HEK293T (cell line): ENCODE measurements at regions of chr19 and their contacts with region 1.

Region 1: GRCh38 chr19:17226002-17226933 is at the start of gene OCEL1:
- DNase-seq: peak; percentile 93

Region 2: DNA sequence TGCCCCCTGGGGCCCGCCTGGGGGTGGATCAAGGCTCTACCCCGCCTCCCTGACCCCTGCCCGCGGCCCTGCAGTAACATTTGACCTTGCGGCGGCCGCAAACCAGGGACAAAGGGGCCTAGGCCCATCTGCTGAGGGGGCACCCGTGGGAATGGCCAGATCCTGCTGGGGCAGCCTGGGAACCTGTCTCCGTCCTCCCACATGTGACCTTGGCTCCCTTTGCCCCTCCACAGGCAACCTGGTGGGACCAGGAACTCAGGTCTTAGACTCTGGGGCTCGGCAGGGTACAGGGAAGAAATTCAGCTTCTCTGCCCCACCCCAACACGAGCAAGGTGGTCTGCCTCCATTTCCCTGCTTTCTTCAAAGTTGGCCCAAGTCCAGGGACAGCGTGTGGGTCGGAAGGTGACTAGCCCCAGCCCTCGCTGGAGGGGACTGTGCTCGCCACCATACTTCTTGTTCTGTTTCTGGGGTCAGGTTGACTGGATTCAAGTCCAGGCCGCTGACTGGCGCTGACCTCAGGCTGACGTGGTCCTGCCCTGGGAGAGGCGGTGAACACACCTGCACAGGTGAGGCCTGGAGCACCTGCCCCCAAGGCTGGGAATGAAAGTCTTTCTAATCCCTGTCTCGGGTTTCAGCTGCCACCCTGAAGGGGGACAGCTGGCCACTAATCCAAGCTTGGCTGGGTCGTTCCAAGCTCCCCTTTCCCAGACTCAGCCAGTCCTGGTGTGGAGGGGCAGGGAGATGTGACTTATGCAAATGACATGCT is 21.9 kb after region 1 on chr19:
- CTCF ChIA-PET with region 1: interaction called, 9 read pairs
- POLR2A ChIA-PET with region 1: interaction called, 11 read pairs
- DNase-seq: no peak

Region 3: DNA sequence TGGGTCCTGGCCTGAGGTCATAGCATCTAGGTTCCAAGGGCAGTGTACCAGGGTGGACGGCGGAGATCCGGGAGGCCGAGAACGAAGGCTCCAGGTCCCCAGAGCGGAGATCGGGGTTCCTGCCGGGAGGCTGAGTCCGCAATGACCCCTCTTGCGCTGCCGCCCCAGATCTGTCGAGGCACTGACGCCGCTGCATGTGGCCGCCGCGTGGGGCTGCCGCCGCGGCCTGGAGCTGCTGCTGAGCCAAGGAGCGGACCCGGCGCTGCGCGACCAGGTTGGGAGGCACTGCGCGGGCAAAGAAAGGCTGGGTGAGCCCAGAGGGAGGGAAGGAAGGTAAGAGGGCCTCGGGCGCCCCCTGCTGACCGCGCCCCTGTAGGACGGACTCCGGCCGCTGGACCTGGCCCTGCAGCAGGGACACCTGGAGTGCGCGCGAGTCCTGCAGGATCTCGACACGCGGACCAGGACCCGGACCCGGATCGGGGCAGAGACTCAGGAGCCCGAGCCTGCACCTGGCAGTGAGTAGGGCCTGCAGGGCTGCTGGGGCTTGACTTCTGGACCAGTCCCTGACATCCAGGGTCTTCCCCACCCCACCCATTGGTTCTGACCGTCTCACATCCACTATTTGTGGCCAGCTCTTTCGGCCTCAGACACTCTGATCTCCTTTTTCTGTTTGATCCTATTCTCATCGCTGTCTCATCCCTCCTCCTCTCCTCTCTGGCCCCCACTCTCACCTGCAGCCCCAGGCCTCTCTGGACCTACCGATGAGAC is 56.4 kb after region 1 on chr19:
- CTCF ChIA-PET with region 1: no interaction called
- POLR2A ChIA-PET with region 1: no interaction called
- DNase-seq: peak; percentile 87

Region 4: DNA sequence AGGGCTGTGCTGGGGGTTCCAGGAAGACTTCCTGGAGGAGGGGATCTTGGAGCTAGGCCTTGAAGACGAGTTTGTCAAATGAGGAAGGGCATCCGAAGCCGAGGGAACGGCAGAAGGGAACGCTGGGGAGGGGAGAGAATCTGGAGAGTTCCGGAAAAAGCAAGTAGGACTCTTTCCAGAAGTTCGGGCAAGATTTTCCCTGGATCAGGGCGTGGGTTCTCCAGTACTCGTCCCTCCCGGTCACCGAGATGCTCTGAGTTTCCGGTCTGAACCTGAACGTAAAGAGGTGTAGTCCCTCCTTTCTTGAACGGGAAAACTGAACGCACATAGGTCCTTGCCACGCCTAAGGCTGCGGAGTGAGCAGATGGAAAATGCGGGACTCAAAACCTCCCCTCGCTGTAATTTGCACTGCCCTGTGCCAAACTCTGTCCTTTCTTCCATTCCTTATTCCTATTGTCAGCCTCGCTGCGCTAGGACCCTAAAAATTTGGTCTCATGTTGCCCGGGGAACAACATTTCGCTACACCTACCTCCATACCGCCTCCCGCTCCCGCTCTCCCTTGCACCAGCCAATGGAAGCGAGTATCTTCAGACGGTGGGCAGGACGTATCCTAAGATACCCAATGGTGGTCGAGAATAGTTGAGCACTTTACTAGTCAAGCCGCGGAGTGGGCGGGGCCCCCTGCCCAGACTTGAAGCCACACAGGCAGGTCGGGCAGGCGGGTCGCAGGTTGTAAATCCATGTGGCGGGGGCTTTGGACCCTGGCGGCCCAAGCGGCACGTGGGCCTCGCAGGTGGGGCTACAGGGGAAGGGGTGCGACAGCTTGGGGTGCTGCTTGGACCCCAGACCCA is 110.8 kb after region 1 on chr19 and contains the start of gene GTPBP3:
- CTCF ChIA-PET with region 1: no interaction called
- POLR2A ChIA-PET with region 1: no interaction called
- DNase-seq: peak; percentile 98